ENCODE measurements at regions of chr1 and their contacts with region 1.

Region 1: DNA sequence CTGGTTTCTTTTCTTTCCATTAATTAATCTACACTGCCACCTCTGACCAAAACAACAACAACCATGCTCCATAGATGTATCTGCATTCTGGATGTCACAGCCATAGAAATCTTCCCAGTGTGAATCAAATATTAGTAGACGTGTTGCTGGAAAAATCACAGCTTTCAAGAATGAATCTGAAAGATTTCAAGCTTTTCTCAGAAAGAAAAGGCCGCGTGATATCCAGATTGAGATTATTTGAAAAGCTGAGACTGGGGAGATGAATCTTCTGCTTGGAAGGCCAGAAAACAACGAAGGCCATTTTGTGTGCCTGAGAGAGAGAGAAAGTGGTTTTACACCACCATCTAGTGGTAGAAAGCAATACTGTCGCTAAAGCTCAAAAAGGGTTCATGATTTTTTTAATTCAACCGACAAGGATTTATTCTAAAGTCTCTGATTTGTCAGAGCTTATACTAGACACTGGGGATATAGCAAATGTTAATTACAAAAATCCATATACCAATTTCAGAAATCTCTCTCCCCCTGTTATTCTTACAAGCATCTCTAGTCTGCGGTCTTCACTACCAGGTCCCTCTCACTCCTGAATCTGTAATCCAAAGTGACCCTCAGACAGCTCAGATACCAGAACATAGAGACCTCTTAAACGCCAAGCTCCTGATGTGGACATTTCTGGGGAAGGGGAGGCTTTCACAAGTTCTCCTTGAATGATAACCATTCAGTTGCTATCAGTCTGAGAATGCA is 87.5 kb upstream of the SGIP1 start:
- DNase-seq: peak; percentile 12
- H3K4me3 Mint-ChIP-seq: peak overlapping the region; percentile 1
- H3K27ac Mint-ChIP-seq: peak overlapping the region; percentile 96
- H3K4me1 Mint-ChIP-seq: peaks cover 28% of the 10 kb centered on the region
- H3K27me3 Mint-ChIP-seq: peaks cover 23% of the 10 kb centered on the region

Region 2: DNA sequence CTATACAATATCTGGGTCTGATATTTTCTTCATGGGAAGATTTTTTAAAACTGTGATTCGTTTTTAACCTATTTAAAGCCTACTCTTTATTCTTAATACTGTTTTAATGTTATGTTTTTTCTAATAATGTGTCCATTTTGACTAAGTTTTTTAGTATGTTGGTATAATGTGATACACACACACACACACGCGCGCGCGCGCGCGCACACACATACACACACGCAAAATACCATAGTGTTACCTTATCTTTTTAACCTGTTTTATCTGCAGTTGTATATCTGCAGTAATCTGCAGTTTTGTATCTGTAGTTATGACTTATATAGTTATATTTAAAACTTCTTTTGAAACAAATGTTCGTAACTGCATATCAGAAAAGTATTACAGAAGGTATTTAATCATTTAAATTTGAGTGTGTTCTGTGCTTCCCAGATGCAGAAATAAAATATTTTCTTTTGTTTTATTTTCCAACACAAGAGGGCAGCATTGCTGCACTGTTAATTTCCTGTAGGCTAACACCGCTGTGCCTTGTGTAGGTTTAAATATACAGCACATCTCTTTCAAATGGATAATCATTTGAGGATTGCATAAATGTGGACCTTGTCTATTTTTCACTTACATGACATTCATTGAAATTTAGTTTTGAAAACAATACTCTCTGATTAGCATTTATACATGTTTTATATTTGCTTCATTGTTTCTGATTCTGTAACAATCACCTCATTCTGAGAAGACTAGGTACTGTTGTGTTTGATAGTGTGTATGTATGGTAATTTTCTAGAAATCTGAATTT is 487.7 kb before region 1 on chr1:
- intact Hi-C with region 1: loop called (anchors 2 kb)
- DNase-seq: no peak
- H3K4me3 Mint-ChIP-seq: no peak overlapping the region
- H3K27ac Mint-ChIP-seq: no peak overlapping the region
- H3K4me1 Mint-ChIP-seq: peaks cover 5% of the 10 kb centered on the region
- H3K27me3 Mint-ChIP-seq: peaks cover 7% of the 10 kb centered on the region

Region 3: DNA sequence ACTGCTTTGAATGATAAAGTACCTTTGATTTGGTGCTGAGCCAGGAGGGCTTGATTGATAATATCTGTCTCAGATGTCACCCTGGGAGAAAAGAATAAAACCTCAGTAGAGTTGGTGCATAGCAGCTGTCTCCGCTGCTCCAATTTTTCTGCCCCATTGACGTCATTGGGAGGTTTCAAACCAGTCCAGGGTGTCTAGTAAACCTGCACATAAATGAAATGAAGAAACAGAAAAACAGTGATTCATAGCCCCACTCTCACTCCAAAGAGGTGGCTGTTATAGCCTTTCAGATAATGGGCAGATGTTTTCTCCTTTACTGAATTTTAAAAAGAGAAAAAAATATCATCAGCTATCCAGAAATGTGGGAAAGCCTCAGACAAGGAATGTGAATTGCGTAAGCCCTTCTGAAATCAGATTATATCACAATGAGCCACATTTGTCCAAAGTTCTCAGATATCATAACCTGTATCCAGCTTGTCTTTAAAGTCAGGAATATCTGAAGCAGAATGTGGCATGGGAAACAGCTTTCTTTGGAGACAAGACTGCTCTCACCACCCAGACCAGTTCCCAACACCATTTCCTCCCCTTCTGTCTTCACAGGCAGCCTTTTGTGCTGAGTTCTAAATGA is 263.8 kb before region 1 on chr1:
- intact Hi-C with region 1: loop called (anchors 5 kb)
- DNase-seq: peak; percentile 29
- H3K4me3 Mint-ChIP-seq: no peak overlapping the region
- H3K27ac Mint-ChIP-seq: peak overlapping the region; percentile 30
- H3K4me1 Mint-ChIP-seq: peaks cover 32% of the 10 kb centered on the region
- H3K27me3 Mint-ChIP-seq: peaks cover 1% of the 10 kb centered on the region

Region 4: DNA sequence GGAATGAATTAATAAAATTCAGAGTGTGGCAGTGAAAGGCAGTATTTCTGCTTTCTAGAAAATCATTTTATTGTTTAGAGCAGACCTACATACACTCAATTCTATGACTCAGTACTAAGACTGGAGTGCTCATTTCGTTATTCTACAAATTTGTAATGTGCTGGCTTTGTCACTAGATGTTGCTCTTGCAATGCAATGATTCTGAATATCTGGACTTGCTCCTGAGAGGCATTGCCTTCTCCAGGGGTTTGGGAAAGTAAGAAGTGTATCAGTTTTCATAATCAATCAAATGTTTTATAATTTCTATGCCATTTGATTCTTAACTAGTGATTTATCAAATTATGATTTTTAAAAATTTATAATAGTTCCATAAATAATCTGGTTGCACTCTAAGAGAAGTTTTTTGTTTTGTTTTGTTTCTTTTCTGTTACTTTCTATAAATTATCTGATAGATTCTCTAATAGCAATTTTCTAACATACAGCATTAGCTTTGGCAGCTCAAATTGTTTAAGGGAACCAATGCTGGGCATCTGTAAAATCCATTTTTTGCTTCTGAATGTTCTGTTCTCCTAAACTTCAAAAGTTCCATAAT is 193.0 kb before region 1 on chr1:
- intact Hi-C with region 1: loop called (anchors 1 kb)
- DNase-seq: no peak
- H3K4me3 Mint-ChIP-seq: no peak overlapping the region
- H3K27ac Mint-ChIP-seq: no peak overlapping the region
- H3K4me1 Mint-ChIP-seq: peaks cover 29% of the 10 kb centered on the region
- H3K27me3 Mint-ChIP-seq: no peaks in the 10 kb centered on the region

Region 5: GRCh38 chr1:66331657-66332547 is 114.5 kb before region 1 on chr1:
- intact Hi-C with region 1: loop called (anchors 10 kb)
- DNase-seq: no peak
- H3K4me3 Mint-ChIP-seq: peak overlapping the region; percentile 97
- H3K27ac Mint-ChIP-seq: peak overlapping the region; percentile 90
- H3K4me1 Mint-ChIP-seq: peaks cover 62% of the 10 kb centered on the region
- H3K27me3 Mint-ChIP-seq: no peaks in the 10 kb centered on the region

Region 6: DNA sequence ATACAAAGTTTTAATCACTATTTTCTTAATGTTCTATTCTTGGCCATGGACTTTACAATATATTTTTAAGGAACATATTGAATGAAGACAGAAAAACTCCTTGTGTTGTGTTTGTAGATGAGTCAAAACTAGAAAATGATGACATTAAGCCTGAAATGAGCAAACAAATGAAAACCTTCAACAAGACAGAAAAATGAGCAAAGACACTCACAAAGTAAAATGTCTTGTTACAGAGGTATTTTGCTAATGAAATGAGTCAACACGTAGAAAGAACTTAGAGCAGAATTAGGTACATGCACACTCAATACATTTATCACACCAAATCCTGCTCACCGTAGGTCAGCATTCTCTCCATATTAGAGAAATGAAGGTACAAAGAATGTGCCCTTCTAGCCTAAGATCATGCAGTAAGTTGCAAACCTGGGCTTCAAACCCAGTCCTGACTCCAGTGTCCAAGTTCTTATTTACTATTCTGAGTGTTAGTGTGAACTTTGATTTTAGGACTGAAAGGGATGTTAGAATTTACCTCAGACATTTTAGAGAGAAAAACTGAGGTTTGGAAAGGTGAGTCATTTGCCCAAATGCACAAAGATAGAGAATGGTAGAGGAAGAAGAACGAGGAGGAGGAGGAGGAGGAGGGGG is 46.4 kb before region 1 on chr1:
- intact Hi-C with region 1: loop called (anchors 2 kb)
- DNase-seq: no peak
- H3K4me3 Mint-ChIP-seq: no peak overlapping the region
- H3K27ac Mint-ChIP-seq: peak overlapping the region; percentile 77
- H3K4me1 Mint-ChIP-seq: peaks cover 35% of the 10 kb centered on the region
- H3K27me3 Mint-ChIP-seq: no peaks in the 10 kb centered on the region

Measured in activated T-helper 2 cell treated with anti-CD3 and anti-CD28 coated beads, Interferon-gamma antibody, Interleukin-2, Interleukin-4, amounts not matched to agents 10 μg/mL and 5 μg/mL and 100 μg/mL, durations not matched to agents 14 hours and 24 hours and 36 hours (primary cell).